ENCODE measurements at regions of chr19 and their contacts with region 1.

Region 1: DNA sequence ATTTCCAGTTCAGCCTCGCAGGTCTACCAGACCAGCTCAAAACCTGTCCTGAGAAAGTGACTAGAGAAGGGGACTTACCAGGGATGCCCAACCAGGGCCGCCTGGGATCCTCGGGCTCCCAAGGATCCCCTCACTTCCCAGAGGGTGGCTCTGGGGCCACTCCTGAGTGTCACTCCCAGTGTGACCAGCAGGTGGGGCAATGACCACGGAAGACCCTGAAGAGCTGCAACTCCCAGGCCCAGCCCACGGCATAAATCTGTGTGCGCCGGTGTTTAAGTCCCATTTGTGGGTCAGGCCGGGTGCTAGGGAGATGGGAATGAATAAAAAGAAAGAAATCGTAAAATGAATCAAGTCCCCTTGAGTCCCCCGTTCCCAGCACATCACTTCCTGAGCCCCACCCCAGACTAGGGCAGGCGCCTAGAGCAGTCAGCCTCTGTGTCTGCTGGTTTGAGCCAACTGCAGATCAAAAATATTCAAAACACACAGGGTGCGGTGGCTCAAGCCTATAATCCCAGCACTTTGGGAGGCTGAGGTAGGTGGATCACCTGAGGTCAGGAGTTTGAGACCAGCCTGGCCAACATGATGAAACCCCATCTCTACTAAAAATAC is 10.7 kb downstream of the PTGIR start:
- DNase-seq: peak; percentile 69 to 88 (median 86)
- H3K4me3 ChIP-seq: no peak overlapping the region
- H3K27ac ChIP-seq: no peak overlapping the region
- H3K4me1 ChIP-seq: no peaks in the 10 kb centered on the region
- H3K27me3 ChIP-seq: no peaks in the 10 kb centered on the region
- CTCF ChIP-seq: peak; percentile 63 to 88 (median 76)
- EP300 ChIP-seq: no peak
- POLR2A ChIP-seq: no peak

Region 2: GRCh38 chr19:46661020-46661731 is 47.0 kb after region 1 on chr19 and contains the start of gene DACT3:
- intact Hi-C with region 1: loop called in 3 of 4 experiments (anchors 2 to 10 kb)
- DNase-seq: peak; percentile 100
- H3K4me3 ChIP-seq: peak within 1 kb of the TSS; percentile 87
- H3K27ac ChIP-seq: peak within 1 kb of the TSS; percentile 61 to 75
- H3K4me1 ChIP-seq: no peaks in the 10 kb centered on the region
- H3K27me3 ChIP-seq: no peaks in the 10 kb centered on the region
- CTCF ChIP-seq: peak in 1 of 3 donors; percentile 20
- EP300 ChIP-seq: peak; percentile 46
- POLR2A ChIP-seq: no peak
- total RNA-seq, gene DACT3: 7.6 to 56.5 (median 20.8) TPM

Region 3: DNA sequence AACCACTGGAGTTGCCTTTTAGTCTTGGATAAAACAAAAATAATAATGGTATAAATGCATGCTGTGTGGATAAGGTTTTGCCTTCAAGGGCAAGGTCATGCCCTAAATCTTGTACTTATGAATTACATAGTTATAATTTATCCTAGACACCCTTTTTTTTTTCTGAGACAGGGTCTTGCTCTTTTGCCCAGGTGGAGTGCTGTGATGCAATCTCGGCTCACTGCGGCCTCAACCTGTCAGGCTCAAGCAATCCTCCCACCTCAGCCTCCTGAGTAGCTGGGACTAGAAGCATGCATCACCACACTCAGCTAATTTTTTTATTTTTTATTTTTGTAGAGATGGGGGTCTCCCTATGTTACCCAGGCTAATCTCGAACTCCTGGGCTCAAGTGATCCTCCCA is 54.4 kb after region 1 on chr19:
- intact Hi-C with region 1: loop called in 3 of 4 experiments (anchors 2 to 10 kb)
- DNase-seq: no peak
- H3K4me3 ChIP-seq: no peak overlapping the region
- H3K27ac ChIP-seq: no peak overlapping the region
- H3K4me1 ChIP-seq: no peaks in the 10 kb centered on the region
- H3K27me3 ChIP-seq: no peaks in the 10 kb centered on the region
- CTCF ChIP-seq: no peak
- EP300 ChIP-seq: no peak
- POLR2A ChIP-seq: no peak

Region 4: DNA sequence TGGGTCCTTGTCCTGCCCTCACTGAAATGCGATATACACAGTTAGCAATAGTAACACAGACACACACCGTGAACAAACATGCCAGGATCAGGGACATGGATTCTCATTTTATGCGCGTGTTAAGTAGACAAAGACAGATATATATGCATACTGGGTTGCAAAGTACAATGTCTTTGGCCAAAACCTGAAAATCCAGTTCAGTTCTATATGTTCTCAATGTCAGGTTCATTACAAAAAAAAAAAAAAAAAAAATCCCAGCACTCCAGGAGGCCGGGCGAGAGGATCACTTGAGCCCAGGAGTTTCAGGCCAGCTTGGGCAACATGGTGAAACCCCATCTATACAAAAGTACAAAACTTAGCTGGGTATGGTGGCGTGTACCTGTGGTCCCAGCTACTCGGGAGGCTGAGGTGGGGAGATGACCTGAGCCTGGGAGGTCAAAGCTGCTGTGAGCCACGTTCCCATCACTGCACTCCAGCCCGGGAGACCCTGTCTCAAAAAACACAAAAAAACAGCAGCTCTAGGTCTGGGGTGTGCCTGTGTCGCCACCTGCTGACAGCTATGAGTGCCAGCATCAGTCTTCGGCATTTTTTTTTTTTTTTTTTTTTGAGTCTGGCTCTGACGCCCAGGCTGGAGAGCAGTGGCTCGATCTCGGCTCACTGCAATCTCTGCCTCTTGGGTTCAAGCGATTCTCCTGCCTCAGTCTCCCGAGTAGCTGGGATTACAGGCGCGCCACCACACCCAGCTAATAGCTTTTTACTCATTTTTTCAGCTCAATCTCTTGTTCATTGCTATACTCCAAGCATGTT is 226.1 kb after region 1 on chr19:
- intact Hi-C with region 1: no loop called
- DNase-seq: peak; percentile 51 to 77 (median 67)
- H3K4me3 ChIP-seq: no peak overlapping the region
- H3K27ac ChIP-seq: no peak overlapping the region
- H3K4me1 ChIP-seq: no peaks in the 10 kb centered on the region
- H3K27me3 ChIP-seq: no peaks in the 10 kb centered on the region
- CTCF ChIP-seq: peak; percentile 76 to 89 (median 86)
- EP300 ChIP-seq: no peak
- POLR2A ChIP-seq: no peak